ENCODE measurements at regions of chr7 and their contacts with region 1.

Region 1: DNA sequence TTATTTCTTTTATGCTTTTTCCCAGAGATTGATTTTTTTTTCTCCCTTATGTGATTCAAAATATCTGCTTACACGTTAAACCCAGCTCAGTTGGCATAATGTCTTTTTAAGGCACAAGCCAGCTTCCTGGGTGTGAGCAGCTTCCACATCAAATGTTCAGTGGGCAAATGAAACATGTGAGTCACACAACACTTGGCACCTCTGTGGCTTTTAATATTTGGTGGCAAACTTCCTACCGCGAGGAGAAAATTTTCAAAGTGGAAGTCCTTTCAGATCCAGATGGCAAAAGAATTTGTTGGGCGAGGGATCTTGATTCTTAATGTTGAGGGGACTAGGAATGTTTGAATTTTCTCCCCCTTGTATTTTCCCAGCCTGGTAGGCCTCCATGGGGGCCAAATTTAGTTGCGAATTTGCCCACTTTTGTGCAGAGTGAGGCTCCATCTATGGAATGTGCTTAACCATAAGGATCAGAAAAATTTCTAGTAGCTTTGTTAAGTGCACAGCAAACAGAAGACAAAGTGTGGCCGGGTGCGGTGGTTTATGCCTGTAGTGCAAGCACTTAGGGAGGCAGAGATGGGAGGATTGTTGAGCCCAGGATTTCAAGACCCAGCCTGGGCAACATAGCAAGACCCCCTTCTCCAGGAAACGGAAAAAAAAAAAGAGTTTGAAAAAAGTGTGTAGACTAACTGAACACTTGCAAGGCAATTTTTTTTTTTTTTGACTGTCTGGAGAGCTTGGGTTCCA is 31.0 kb downstream of the CUX1 start:
- DNase-seq: no peak
- H3K4me3 ChIP-seq: no peak overlapping the region
- H3K27me3 ChIP-seq: no peaks in the 10 kb centered on the region
- CTCF ChIP-seq: no peak

Region 2: DNA sequence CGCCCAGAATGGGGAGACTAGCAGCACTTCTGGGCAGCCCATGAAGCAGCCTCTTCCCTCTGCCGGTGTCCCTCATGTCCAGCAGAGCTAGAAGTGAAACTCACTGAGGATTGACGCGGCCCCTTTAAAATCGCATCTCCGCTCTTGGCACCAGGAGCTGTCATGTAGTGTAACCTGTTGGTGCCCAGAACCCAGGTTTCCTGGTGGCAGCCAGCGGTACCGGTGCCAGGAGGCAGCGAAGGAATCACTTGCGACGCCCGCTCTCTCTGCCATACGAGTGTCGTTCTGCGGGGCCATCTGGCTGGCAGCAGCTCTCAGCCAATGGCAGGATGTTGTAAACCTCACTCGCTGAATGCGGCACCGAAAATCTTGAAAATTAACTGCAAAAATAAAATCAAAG is 51.7 kb after region 1 on chr7:
- CTCF ChIA-PET with region 1: no interaction called
- POLR2A ChIA-PET with region 1: no interaction called
- DNase-seq: no peak
- H3K4me3 ChIP-seq: peak overlapping the region; percentile 44
- H3K27me3 ChIP-seq: no peaks in the 10 kb centered on the region
- CTCF ChIP-seq: peak; percentile 25; the same call in 1 of the 2 replicates

Region 3: GRCh38 chr7:101985057-101985902 is 136.9 kb after region 1 on chr7:
- CTCF ChIA-PET with region 1: no interaction called
- POLR2A ChIA-PET with region 1: interaction called, 11 read pairs
- DNase-seq: no peak
- H3K4me3 ChIP-seq: no peak overlapping the region
- H3K27me3 ChIP-seq: no peaks in the 10 kb centered on the region
- CTCF ChIP-seq: no peak

Region 4: DNA sequence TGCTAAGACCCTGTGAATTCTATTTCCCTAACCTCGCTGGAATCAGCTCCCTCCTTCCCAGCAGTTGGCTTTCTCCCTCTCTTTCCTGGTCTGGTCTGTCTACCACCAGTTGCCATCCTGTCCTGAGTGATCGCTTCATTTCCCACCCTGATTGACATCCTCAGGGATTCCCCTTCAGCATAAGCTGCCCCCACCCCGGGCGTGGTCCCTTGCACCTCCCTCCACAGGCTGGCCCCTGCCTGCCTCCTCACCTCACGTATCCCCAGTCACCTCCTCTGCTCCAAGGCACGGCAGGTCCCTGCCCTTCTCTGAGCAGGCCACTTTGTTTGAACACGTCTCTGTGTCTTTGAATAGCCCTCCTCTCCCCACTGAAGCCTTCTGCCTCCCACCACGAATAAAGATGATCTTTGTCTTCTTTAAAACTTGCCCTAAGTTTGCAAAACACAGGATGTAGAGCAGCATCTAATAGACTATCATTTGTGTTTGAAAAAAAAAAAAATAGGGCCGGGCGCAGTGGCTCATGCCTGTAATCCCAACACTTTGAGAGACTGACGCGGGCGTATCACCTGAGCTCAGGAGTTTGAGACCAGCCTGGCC is 202.6 kb after region 1 on chr7:
- CTCF ChIA-PET with region 1: no interaction called
- POLR2A ChIA-PET with region 1: interaction called, 17 read pairs
- DNase-seq: no peak
- H3K4me3 ChIP-seq: no peak overlapping the region
- H3K27me3 ChIP-seq: no peaks in the 10 kb centered on the region
- CTCF ChIP-seq: no peak

Measured in BJ (cell line).